ENCODE measurements at regions of chr17 and their contacts with region 1.

Region 1: DNA sequence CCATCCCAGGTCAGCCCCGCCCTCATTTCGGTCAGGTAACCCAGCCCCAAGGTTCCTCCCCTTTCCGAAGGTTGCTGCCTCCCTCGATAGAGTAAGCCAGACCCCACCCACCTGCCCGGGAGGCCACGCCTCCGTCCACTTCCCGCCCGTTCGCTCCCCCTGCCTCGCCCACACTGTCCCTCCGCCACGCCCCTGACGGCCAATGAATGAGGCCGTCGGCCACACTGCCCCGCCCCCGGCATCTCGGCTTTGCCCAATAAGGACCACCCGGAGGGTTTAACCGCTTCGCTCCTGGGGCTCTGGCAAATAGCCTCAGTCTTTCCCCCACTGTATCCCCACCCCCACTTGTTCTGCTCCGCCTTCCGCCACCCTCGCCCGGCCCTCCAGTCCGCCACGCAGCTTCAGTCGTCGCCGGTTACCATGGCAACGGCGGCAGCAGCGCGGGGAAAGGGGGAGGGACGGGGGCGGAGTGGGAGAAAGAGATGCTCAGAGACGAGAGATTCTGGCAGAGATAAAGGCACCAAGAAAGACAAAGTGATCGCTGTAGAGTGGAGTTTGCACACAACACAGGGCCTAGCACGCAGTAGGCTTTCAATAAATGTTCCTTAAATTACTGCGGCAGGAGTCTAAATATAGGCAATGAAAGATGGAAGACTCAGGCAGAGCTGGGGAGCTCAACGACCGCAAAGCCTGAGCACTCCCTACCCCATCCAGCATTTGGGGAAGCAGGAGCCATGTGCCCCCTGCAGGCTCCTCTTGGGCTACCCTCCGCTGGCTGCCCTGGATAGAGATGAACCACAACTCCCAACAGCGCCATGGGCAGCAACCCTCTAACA is 5.1 kb downstream of the DLG4 start:
- DNase-seq: peak; percentile 100
- ATAC-seq: peak; percentile 77
- H3K4me3 Mint-ChIP-seq: peak overlapping the region; percentile 86
- H3K27ac Mint-ChIP-seq: peak overlapping the region; percentile 98
- H3K4me1 Mint-ChIP-seq: peaks cover 61% of the 10 kb centered on the region
- H3K27me3 Mint-ChIP-seq: peaks cover 4% of the 10 kb centered on the region; the same call in 1 of the 2 replicates
- CTCF ChIP-seq: no peak

Region 2: DNA sequence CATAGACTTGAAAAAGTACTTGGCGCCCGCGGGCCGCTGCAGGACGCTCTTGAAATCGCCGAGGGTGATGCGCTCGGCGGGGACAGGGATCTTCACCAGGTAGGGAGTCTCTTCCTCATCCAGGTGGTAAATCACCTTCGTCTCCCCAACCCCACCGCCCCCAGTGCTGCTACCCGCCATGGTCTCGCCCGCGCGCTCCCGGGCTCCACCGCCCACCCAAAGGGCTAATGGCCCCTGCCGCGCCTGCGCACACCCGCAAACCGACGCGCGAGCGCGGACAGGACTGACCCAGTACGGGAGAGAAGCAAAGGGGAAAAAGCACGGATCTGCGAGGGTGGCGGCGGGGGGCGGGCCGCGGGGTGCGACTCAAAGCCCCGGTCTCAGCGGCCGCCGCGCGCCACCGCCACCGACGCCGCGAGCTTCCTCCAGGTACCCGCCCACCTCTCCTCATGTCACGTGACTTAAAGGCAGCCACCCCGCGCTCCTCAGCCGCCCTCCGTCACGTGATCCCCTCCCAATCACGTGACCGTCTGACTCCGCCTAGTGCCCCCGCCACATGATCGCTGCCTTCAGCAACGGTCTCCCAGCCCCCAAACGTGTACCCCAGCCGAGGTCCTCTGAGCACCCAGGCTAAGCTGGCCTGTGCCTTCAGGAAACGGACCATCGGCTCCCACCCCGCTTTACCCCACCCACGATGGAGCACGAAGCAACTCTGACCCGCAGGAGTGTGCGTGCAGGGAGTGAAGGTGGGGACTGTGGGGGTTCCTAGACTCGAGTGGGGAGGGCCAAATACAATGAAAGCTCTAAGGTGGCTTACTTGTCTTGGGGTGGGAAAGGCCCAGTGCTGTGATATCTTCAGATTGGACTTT is 19.8 kb after region 1 on chr17 and contains the start of gene DVL2:
- CTCF ChIA-PET with region 1: interaction called, 36 read pairs
- POLR2A ChIA-PET with region 1: interaction called, 5 read pairs
- DNase-seq: peak; percentile 95
- ATAC-seq: peak; percentile 31
- H3K4me3 Mint-ChIP-seq: peak within 1 kb of the TSS; percentile 99
- H3K27ac Mint-ChIP-seq: peak within 1 kb of the TSS; percentile 96
- H3K4me1 Mint-ChIP-seq: peaks cover 29% of the 10 kb centered on the region
- H3K27me3 Mint-ChIP-seq: no peaks in the 10 kb centered on the region
- CTCF ChIP-seq: no peak
- total RNA-seq, gene DVL2: 57.6 to 67.3 TPM (median 59.8 TPM) in 3 replicates

Region 3: GRCh38 chr17:7239091-7240027 is 24.8 kb after region 1 on chr17 and contains the start of gene PHF23:
- CTCF ChIA-PET with region 1: interaction called, 36 read pairs
- POLR2A ChIA-PET with region 1: interaction called, 6 read pairs
- DNase-seq: peak; percentile 99
- ATAC-seq: peak; percentile 73
- H3K4me3 Mint-ChIP-seq: peak within 1 kb of the TSS; percentile 95
- H3K27ac Mint-ChIP-seq: peak within 1 kb of the TSS; percentile 93
- H3K4me1 Mint-ChIP-seq: peaks cover 39% of the 10 kb centered on the region
- H3K27me3 Mint-ChIP-seq: no peaks in the 10 kb centered on the region
- CTCF ChIP-seq: no peak
- total RNA-seq, gene PHF23: 45.8 to 50.1 TPM (median 49.1 TPM) in 3 replicates

Region 4: GRCh38 chr17:7249830-7250229 is 35.3 kb after region 1 on chr17:
- CTCF ChIA-PET with region 1: no interaction called
- POLR2A ChIA-PET with region 1: no interaction called
- DNase-seq: no peak
- ATAC-seq: no peak
- H3K4me3 Mint-ChIP-seq: peak overlapping the region; percentile 92
- H3K27ac Mint-ChIP-seq: peak overlapping the region; percentile 70; the same call in 1 of the 2 replicates
- H3K4me1 Mint-ChIP-seq: peaks cover 34% of the 10 kb centered on the region
- H3K27me3 Mint-ChIP-seq: no peaks in the 10 kb centered on the region
- CTCF ChIP-seq: no peak